ENCODE measurements at regions of chr21 and their contacts with region 1.

Region 1: DNA sequence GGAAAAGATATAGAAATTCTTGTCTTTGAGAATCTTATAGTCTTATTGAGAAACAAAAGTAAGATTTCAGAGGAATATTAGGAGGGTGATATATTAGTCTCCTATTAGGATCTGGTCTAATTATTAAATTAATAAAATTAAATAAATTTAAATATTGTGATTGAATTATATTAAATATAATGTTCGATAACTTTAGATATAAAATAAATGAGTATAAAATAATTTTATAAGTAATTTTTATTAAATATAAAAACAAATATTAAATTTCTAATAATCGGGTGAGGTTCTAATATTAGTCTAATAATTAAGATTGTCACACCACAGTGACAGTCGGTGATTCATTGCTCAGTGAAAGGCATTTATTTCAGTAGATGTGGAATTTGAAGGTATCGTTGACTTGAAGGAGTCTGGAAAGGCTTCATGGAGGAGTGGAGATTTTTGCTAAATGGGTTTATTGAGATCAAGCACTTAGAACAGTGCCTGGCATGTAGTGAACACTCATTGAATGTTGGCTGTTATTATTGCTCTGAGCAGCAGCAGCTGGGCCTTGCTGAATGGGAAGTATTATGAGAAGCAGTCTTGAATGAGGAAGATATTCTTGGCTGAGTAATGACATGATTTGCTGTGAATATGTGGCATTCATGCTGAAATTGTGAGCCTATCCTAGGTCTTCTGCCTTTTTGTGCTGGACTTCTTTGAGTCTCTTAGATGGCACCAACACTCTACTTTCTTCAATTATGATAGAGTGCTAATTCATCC is 74.6 kb downstream of the USP25 start:
- DNase-seq: no peak
- ATAC-seq: no peak
- H3K4me3 ChIP-seq: no peak overlapping the region
- H3K4me3 Mint-ChIP-seq: no peak overlapping the region
- H3K27ac ChIP-seq: no peak overlapping the region
- H3K27ac Mint-ChIP-seq: peak overlapping the region in 1 of 9 donors; percentile 51
- H3K4me1 ChIP-seq: no peaks in the 10 kb centered on the region
- H3K4me1 Mint-ChIP-seq: peaks cover 5 to 34% (median 19%) of the 10 kb centered on the region in 7 donors
- H3K27me3 ChIP-seq: no peaks in the 10 kb centered on the region
- H3K27me3 Mint-ChIP-seq: no peaks in the 10 kb centered on the region

Region 2: GRCh38 chr21:15742052-15742670 is 62.3 kb before region 1 on chr21:
- CTCF ChIA-PET with region 1: no interaction called
- POLR2A ChIA-PET with region 1: no interaction called
- intact Hi-C with region 1: no loop called
- DNase-seq: no peak
- ATAC-seq: no peak
- H3K4me3 ChIP-seq: no peak overlapping the region
- H3K4me3 Mint-ChIP-seq: peak overlapping the region in 5 of 10 donors; percentile 5 to 98 (median 41)
- H3K27ac ChIP-seq: no peak overlapping the region
- H3K27ac Mint-ChIP-seq: peak overlapping the region in 2 of 9 donors; percentile 5 to 28
- H3K4me1 ChIP-seq: peaks cover 21 to 28% of the 10 kb centered on the region in 2 donors
- H3K4me1 Mint-ChIP-seq: peaks cover 53 to 100% (median 93%) of the 10 kb centered on the region in 7 donors
- H3K27me3 ChIP-seq: no peaks in the 10 kb centered on the region
- H3K27me3 Mint-ChIP-seq: no peaks in the 10 kb centered on the region

Region 3: GRCh38 chr21:15820852-15821379 is 16.5 kb after region 1 on chr21:
- CTCF ChIA-PET with region 1: no interaction called
- POLR2A ChIA-PET with region 1: no interaction called
- intact Hi-C with region 1: loop called in 1 of 2 experiments (anchors 2 kb)
- DNase-seq: no peak
- ATAC-seq: no peak
- H3K4me3 ChIP-seq: no peak overlapping the region
- H3K4me3 Mint-ChIP-seq: no peak overlapping the region
- H3K27ac ChIP-seq: no peak overlapping the region
- H3K27ac Mint-ChIP-seq: peak overlapping the region in 5 of 9 donors; percentile 26 to 83 (median 47)
- H3K4me1 ChIP-seq: peaks cover 16 to 21% of the 10 kb centered on the region in 2 donors
- H3K4me1 Mint-ChIP-seq: peaks cover 23 to 74% (median 56%) of the 10 kb centered on the region in 7 donors
- H3K27me3 ChIP-seq: no peaks in the 10 kb centered on the region
- H3K27me3 Mint-ChIP-seq: no peaks in the 10 kb centered on the region

Measured in naive thymus-derived CD4-positive, alpha-beta T cell (primary cell).